ENCODE measurements at regions of chr22 and their contacts with region 1.

Region 1: DNA sequence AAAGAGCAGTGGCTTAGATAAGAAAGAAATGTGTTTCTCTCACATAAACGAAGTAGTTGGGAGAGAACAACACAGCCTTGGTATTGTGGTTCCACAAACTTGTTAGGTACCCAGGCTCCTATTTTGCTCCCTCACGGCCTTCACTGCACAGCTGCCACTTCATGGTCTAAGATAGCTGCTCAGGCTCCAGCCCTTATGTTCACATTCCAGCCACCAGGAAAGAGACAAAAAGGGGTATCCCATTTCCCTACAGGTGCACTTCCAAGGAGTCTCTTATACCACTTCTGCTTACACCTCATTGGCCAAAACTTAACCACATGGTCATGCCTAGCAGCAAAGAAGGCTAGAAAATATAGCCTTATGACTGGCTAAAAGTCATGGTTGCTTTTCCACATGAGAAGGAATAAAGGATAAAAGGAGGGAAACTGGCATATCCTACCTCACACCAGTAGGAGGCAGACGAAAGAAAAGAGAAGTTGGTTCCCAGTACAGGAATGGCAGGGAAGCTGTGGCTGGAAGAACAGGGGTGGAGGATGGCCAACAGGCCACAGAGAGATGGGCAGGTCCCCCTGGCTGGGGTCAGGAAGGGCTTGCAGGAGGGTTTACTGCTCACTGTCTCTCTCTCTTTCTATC is 5.4 kb upstream of the HDHD5 start:
- DNase-seq: no peak

Region 2: GRCh38 chr22:17047656-17048055 is 116.9 kb before region 1 on chr22:
- intact Hi-C with region 1: no loop called
- DNase-seq: no peak

Region 3: GRCh38 chr22:17077255-17077654 is 87.3 kb before region 1 on chr22:
- intact Hi-C with region 1: loop called (anchors 10 kb)
- DNase-seq: peak in 1 of 42 donors; percentile 14

Region 4: DNA sequence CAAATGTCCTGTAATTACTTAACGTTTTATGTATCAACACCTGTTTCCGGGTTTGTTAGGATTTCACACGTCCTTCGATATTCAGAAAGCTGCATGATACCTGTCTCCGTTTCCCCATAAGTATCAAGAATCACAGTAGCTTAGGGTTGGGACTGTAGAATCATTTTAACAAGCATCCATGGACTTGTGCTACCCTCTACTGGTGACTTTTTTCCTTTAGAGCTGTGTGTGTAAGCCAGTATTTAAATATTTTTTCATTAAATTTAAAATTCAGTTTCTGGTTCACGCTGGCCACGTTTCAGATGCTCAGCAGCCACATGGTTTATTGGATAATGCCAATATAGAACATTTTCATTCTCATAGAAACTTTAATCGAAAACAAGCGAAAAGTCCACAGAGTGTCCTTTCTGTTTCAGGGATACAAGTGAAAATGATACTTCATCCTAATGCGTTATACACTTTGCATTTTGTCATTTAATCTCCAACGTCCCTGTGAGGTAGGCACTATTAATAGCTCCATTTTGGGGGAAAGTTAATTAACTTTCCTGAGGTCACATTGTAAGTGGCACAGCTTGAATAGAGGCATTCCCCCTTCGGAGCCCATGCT is 337.3 kb after region 1 on chr22:
- intact Hi-C with region 1: loop called (anchors 5 kb)
- DNase-seq: peak in 20 of 42 donors; percentile 5 to 79 (median 40)

Measured in head of caudate nucleus (tissue), 42 donors.